Stomach (tissue), 19 donors: ENCODE measurements at regions of chr22 and their contacts with region 1.

Region 1: DNA sequence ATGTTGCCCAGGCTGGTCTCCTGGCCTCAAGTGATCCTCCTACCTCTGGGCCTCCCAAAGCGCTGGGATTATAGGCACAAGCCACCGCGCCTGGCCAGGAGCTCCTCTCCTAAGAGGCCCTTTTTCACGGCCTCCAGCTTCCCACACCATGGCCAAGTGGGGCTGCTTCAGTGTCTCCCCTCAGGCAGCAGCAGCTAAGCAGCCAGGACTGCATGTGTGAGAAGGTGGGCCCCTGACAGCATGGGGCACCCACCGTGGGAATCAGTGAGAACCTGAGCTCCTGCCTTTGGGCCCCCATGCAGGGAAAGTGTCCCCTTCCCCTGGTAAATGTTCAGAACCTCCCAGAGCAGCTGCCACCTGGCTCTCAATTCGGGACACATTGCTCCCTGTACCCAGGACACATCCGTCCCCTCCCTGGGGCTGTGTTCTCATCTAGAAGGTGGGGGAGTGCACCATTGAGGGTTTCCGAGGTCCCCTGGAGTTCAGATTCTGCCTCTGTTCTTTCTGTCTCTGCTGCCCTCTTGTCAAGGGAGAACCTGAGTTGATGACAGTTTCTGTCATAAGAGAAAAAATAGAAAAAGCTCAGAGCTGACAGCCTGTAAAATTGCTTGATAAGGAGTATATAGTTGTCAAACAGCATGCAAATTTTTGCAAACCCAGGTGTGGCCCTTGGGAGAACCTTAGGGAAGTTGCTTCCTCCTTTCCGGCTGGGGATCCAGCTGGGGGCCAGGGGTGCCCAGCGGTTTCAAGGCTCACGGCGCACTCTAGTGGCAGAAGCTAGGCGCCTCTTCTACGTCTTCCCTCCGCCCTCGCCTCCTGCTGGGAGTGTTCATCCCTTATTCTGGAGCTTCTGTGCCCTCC is 29.7 kb downstream of the FAM83F start:
- DNase-seq: peak; percentile 81 to 88
- H3K4me3 ChIP-seq: no peak overlapping the region
- H3K27ac ChIP-seq: peak overlapping the region in 1 of 5 donors; percentile 1
- H3K4me1 ChIP-seq: peaks cover 9 to 33% (median 17%) of the 10 kb centered on the region in 4 donors
- H3K27me3 ChIP-seq: no peaks in the 10 kb centered on the region
- CTCF ChIP-seq: peak in 5 of 7 experiments; percentile 75 to 90 (median 82)
- EP300 ChIP-seq: no peak
- POLR2A ChIP-seq: no peak

Region 2: DNA sequence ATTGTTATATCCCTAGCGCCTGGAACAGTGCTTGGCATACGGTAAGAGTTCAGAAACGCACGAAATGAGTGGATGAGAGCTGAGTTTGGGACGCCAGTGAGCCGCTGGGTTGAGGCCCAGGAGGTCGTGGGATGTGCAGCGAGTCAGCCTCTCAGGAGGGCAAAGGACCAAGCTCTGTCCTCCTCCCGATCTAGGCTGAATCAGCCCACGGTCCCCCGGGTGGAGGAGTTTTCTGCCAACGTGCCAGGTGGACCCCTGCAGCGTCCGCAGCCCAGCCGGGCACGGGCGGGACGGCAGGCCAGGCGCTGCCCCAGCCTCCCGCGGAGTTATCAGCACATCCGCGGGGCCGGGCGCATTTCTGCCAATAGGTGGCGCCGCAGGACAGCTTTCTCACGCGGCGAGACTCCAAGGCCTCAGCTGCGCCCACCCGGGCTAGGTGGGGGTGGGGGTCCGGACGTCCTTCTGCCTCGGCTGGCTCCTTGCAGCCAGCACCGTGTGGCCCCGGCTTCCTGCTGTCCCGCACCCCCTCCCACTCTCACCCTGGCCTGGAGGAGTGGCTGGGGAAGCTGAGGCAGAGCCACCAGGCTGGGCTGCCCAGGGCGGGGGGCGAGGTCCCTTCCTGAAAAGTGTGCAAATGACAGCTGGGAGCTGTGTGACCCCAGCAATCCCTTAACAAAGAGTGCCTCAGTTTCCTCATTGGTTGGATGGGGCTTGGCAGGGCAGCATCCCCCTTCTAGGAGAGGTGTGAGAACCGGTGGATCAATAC is 489.7 kb before region 1 on chr22:
- intact Hi-C with region 1: loop called (anchors 5 kb)
- DNase-seq: peak; percentile 91 to 94
- H3K4me3 ChIP-seq: peak overlapping the region in 3 of 4 donors; percentile 12 to 34 (median 12)
- H3K27ac ChIP-seq: peak overlapping the region in 2 of 5 donors; percentile 32 to 39
- H3K4me1 ChIP-seq: peaks cover 28 to 40% (median 39%) of the 10 kb centered on the region in 4 donors
- H3K27me3 ChIP-seq: no peaks in the 10 kb centered on the region
- CTCF ChIP-seq: peak in 5 of 7 experiments; percentile 88 to 96 (median 89)
- EP300 ChIP-seq: no peak
- POLR2A ChIP-seq: no peak

Region 3: DNA sequence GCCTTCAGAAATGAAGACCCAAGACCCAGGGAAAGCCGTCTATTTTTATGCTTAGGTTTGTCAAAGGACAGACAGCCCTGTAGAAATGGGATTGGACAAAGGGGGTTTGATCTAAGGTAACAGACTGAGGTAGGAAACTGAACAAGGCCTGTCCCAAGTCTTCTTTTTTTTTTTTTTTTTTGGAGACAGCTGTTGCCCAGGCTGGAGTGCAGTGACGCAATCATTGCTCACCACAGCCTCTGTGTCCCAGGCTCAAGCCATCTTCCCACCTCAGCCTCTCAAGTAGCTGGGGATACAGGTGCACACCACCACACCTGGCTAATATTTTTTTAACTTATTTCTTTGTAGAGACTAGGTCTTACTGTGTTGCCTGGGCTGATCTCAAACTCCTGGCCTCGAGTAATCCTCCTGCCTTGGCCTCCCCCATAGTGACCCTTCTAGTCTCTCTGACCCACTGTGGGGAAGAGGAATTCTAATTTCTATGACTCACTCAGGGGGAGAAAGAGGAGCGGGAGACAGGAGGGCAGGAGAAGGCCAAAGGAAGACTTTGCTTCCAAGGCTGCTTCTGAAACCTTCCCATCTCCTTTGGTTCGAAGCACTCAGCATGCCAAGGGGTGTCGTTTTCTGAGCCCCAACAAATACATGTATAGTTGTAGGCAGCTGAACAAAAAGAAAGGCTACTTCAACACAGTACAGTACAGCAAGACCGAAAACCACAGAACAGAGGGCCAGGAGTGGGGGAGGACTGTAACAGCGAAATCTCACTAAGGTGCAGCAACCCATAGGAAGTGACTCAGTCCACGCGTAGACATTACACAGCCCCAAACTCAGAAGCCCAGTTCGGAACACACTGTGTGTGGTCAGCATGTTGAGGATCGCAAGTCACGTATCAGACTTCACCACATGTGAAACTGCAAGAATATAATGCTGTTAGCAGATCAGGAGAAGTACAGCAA is 63.4 kb before region 1 on chr22:
- intact Hi-C with region 1: no loop called
- DNase-seq: peak; percentile 40 to 52
- H3K4me3 ChIP-seq: no peak overlapping the region
- H3K27ac ChIP-seq: peak overlapping the region in 3 of 5 donors; percentile 25 to 66 (median 52)
- H3K4me1 ChIP-seq: peaks cover 0 to 24% (median 3%) of the 10 kb centered on the region in 4 donors
- H3K27me3 ChIP-seq: no peaks in the 10 kb centered on the region
- CTCF ChIP-seq: no peak
- EP300 ChIP-seq: no peak
- POLR2A ChIP-seq: no peak